ENCODE measurements at regions of chr10 and their contacts with region 1.

Region 1: GRCh38 chr10:88565072-88565471 is 18.0 kb downstream of the RNLS start:
- DNase-seq: peak; percentile 22
- H3K4me3 ChIP-seq: no peak overlapping the region
- H3K27ac ChIP-seq: no peak overlapping the region
- H3K4me1 ChIP-seq: 0 out of 4 replicates have a peak, but pooled peaks cover 0 to 3% of the 10 kb centered on the region in 2 experiments
- H3K27me3 ChIP-seq: no peaks in the 10 kb centered on the region
- CTCF ChIP-seq: peak; percentile 76
- EP300 ChIP-seq: no peak
- RAD21 ChIP-seq: peak; percentile 87

Region 2: GRCh38 chr10:88553116-88553752 is 11.8 kb before region 1 on chr10:
- CTCF ChIA-PET with region 1: interaction called, 57 read pairs
- POLR2A ChIA-PET with region 1: no interaction called
- DNase-seq: peak; percentile 48
- H3K4me3 ChIP-seq: no peak overlapping the region
- H3K27ac ChIP-seq: peak overlapping the region in 1 of 2 experiments; percentile 34; a peak in 1 of 4 replicates
- H3K4me1 ChIP-seq: peaks cover 8% of the 10 kb centered on the region in 2 experiments; a peak in 2 of 4 replicates
- H3K27me3 ChIP-seq: no peaks in the 10 kb centered on the region
- CTCF ChIP-seq: peak; percentile 85
- EP300 ChIP-seq: no peak
- RAD21 ChIP-seq: peak; percentile 98

Region 3: GRCh38 chr10:88618496-88618895 is 53.4 kb after region 1 on chr10:
- CTCF ChIA-PET with region 1: interaction called, 12 read pairs
- POLR2A ChIA-PET with region 1: no interaction called
- DNase-seq: no peak
- H3K4me3 ChIP-seq: no peak overlapping the region
- H3K27ac ChIP-seq: no peak overlapping the region
- H3K4me1 ChIP-seq: peaks cover 0 to 6% of the 10 kb centered on the region in 2 experiments; a peak in 2 of 4 replicates
- H3K27me3 ChIP-seq: no peaks in the 10 kb centered on the region
- CTCF ChIP-seq: no peak
- EP300 ChIP-seq: no peak
- RAD21 ChIP-seq: no peak

Region 4: GRCh38 chr10:88687853-88688467 is 122.9 kb after region 1 on chr10:
- CTCF ChIA-PET with region 1: interaction called, 16 read pairs
- POLR2A ChIA-PET with region 1: no interaction called
- DNase-seq: peak; percentile 34
- H3K4me3 ChIP-seq: no peak overlapping the region; a peak in 1 of 4 replicates
- H3K27ac ChIP-seq: no peak overlapping the region
- H3K4me1 ChIP-seq: no peaks in the 10 kb centered on the region; a peak in 1 of 4 replicates
- H3K27me3 ChIP-seq: no peaks in the 10 kb centered on the region
- CTCF ChIP-seq: peak; percentile 87
- EP300 ChIP-seq: no peak
- RAD21 ChIP-seq: peak; percentile 75

Region 5: GRCh38 chr10:88735661-88736060 is 170.6 kb after region 1 on chr10:
- CTCF ChIA-PET with region 1: no interaction called
- POLR2A ChIA-PET with region 1: no interaction called
- DNase-seq: no peak
- H3K4me3 ChIP-seq: no peak overlapping the region
- H3K27ac ChIP-seq: no peak overlapping the region
- H3K4me1 ChIP-seq: peaks cover 5% of the 10 kb centered on the region in 2 experiments; a peak in 2 of 4 replicates
- H3K27me3 ChIP-seq: no peaks in the 10 kb centered on the region
- CTCF ChIP-seq: no peak
- EP300 ChIP-seq: 0 out of 4 replicates have a peak, but pooled peaks of 1 of the 2 experiments have one; percentile 17
- RAD21 ChIP-seq: no peak

Region 6: DNA sequence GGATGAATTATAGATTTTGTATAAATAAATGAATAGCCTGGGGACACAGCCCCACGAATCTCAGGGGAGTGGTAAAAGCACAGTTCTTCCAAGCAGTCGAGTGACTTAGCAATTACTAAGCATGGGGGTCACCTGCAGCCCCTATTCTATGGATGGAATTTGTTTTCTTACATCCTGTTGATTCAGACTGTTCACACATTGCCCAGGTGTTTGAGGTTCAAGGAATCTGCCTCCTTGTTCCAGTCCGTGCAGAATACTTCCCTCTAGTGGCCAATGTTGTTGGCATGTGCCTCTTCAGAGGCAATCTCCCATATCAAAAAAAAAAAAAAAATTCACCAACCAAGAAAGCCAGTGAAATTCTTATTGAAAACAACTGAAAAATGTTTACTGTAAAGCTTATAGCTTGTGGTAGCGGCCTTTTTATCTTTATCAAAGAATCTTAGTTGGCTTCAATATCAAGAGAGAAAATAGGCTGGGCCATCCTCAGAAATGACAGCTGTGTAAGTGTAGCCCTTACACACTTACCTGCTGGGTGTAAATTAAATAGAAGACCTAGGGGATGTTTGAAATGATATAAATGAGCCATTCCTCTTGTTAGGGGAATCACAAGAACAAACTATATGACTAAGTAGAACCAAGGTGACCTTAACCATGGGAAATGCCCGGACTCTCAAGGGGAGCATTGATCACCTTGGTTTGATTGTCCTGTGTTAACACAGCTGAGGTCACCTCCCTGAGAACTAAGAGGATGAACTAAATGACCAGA is 245.3 kb after region 1 on chr10:
- CTCF ChIA-PET with region 1: interaction called, 50 read pairs
- POLR2A ChIA-PET with region 1: no interaction called
- DNase-seq: peak; percentile 36
- H3K4me3 ChIP-seq: no peak overlapping the region; a peak in 1 of 4 replicates
- H3K27ac ChIP-seq: no peak overlapping the region
- H3K4me1 ChIP-seq: peaks cover 0 to 1% of the 10 kb centered on the region in 2 experiments; a peak in 1 of 4 replicates
- H3K27me3 ChIP-seq: no peaks in the 10 kb centered on the region
- CTCF ChIP-seq: peak; percentile 92
- EP300 ChIP-seq: no peak
- RAD21 ChIP-seq: peak; percentile 76